ENCODE measurements at regions of chr4 and their contacts with region 1.

Region 1: DNA sequence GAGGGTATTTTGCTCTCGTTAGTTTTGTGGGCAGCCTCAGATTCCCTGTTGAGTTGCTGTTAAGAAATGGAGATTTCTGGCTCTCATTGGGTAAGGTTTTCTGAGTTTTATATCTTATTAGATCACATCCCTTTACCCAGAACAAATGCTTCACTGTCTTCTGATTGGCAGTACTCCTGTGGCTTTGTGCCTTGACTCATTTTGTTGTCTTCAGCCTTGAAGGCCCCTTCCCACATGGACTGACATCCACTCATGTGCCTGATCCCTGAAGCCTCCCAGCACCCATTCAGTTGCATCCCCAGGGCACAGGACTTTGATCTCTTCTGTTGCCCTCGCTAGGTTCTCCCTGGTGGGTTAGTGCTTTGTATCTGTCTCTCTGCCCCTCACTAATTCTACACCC is 10.4 kb downstream of the MED28 start:
- DNase-seq: no peak
- ATAC-seq: no peak
- H3K4me3 ChIP-seq: no peak overlapping the region
- H3K27ac ChIP-seq: no peak overlapping the region
- H3K4me1 ChIP-seq: peaks cover 0 to 3% (median 1%) of the 10 kb centered on the region in 9 donors
- H3K27me3 ChIP-seq: no peaks in the 10 kb centered on the region
- CTCF ChIP-seq: no peak

Region 2: DNA sequence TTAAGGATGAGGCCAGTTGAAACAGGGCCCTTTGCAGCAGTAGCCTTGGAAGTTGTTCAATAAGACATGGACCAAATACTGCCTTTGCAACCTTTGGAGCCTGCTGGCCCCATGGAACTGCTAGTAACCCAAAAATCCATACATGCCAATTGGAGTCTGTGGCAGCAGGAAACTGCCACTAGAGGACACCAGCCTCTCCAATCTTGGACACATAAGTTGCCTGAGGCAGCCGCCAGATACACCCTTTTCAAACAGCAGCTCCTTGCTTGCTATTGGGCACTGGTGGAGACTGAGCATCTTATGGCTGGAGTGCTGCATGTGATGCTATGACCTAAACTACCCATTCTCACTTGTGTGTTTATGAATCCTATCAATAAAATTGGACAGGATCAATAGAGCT is 62.7 kb before region 1 on chr4:
- intact Hi-C with region 1: loop called in 1 of 10 experiments (anchors 5 kb)
- DNase-seq: no peak
- ATAC-seq: no peak
- H3K4me3 ChIP-seq: no peak overlapping the region
- H3K27ac ChIP-seq: no peak overlapping the region
- H3K4me1 ChIP-seq: no peaks in the 10 kb centered on the region
- H3K27me3 ChIP-seq: no peaks in the 10 kb centered on the region
- CTCF ChIP-seq: peak in 3 of 9 donors; percentile 22 to 28 (median 24)

Region 3: DNA sequence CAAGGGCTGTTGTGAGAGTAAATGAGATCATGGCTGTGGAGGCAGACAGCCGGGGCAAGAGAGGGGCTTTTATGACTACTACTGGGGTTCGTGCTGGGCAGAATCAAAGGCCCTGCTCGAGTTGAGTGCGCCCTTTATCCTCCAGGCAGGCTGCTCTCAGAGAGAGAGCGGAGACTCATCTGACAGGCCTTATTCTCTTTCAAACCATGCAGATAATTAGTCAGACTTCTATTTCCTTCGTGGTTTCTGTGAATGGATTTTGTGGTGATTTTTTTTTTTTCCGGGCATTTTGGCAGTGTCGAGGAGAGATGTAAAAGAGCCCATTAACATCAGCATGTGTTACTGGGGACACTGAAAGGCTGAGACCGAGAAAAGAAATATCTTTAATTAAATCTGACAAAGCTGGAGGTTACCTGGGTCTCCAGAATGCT is 63.2 kb after region 1 on chr4:
- intact Hi-C with region 1: no loop called
- DNase-seq: no peak
- ATAC-seq: no peak
- H3K4me3 ChIP-seq: no peak overlapping the region
- H3K27ac ChIP-seq: no peak overlapping the region
- H3K4me1 ChIP-seq: no peaks in the 10 kb centered on the region
- H3K27me3 ChIP-seq: no peaks in the 10 kb centered on the region
- CTCF ChIP-seq: no peak

Measured in heart right ventricle (tissue), 16 donors.